Upper lobe of right lung (tissue), 1 donor: ENCODE measurements at regions of chr19 and their contacts with region 1.

Region 1: DNA sequence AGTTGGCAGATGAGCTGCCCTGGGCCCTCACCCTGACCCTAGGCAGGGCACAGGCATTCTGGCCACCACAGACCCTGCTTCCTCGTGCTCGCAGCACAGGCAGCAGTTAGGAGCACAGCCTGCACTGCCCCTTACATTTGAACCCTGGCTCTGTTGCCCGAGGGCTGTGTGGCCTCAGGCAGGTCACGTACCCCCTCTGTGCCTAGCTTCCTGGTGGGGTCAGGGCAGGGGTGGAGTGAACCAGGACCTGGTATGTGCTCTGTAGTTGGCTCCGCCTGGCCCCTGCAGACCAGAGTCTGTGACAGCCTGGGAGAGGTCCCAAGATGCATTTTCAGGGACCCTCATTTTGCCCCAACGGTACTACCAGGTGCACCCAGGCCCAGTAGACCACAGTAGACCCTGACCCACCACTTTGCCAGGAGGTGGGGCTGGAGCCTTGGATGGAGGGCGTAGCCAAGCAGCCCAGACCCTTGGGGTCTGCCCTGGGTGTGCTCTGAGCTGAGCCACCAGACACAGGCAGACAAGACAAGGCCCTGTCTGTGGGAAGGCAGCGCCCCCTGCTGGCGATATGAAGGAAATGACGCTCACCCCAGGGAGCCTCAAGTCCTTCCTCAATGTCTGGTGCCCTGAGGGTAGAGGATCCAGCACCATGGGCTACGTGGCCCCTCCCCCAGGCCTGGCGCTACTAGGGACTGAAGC is 9.1 kb downstream of the LYL1 start:
- DNase-seq: peak; percentile 88
- ATAC-seq: peak; percentile 80
- H3K4me3 ChIP-seq: no peak overlapping the region
- H3K27ac ChIP-seq: peak overlapping the region; percentile 72
- H3K4me1 ChIP-seq: peaks cover 44% of the 10 kb centered on the region
- H3K27me3 ChIP-seq: no peaks in the 10 kb centered on the region
- CTCF ChIP-seq: peak; percentile 92

Region 2: GRCh38 chr19:13022859-13023636 is 70.5 kb before region 1 on chr19:
- intact Hi-C with region 1: loop called (anchors 10 kb)
- DNase-seq: peak; percentile 86
- ATAC-seq: peak; percentile 70
- H3K4me3 ChIP-seq: peak overlapping the region; percentile 53
- H3K27ac ChIP-seq: peak overlapping the region; percentile 91
- H3K4me1 ChIP-seq: peaks cover 63% of the 10 kb centered on the region
- H3K27me3 ChIP-seq: no peaks in the 10 kb centered on the region
- CTCF ChIP-seq: no peak